ENCODE measurements at regions of chr1 and their contacts with region 1.

Region 1: DNA sequence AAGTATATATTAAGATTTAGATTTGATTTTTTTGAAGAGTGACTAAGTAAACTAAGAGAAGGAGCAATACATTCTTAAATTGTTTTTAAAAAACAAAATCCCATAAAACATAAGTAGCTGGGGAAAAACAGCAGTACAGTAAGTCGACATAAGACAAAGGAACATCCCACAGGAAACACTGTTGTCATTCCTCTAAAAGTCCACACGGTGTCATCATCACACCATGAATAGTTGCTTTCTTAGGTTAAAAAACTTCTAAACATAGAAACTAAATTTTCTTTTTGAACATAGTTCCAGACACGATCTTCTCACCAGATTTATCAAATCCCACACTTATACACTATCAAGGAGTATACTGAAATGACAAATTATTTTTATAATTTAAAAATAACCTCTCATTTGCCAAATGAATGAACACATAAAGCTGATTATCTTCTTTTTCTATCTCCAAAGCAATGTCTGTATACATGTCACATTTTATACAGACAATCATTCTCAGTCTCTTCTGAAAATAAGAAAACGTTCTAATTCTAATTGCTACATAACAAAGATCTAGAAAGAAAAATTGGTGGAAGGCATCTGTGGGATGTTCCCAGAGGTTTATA is 15.8 kb downstream of the ODF2L start:
- DNase-seq: peak; percentile 75
- H3K4me3 Mint-ChIP-seq: no peak overlapping the region
- H3K27ac Mint-ChIP-seq: no peak overlapping the region
- H3K4me1 Mint-ChIP-seq: peaks cover 3% of the 10 kb centered on the region
- H3K27me3 Mint-ChIP-seq: no peaks in the 10 kb centered on the region

Region 2: DNA sequence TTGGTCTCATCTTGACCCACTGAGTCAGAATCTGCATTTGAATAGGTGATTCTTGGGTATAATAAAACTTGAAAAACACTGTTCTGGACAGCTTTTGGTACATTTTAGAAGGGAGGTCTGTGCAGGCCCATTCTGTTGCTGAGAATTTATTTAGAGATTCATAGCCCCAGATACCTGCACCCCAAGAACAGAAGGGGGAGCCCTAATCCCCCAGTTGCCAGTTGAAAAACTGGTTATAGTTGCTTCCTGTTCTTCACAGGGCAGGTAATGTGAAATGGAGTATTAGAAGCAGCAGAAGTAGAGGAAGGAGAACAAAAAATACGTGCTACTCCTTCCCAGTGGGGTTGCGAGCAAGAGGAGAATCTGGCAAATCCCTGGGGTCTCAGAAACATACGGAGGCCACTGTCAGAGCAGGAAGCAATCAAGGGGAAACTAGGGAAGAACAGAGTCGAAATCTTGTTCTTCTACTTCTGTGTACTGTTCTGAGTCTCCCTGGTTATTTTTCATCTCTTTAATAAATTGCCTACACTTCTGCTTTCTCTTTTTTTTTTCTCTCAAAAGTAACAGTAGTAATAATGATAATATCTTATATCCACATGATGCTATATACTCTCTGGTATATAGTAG is 39.0 kb after region 1 on chr1:
- intact Hi-C with region 1: loop called (anchors 2 kb)
- DNase-seq: peak; percentile 85
- H3K4me3 Mint-ChIP-seq: peak overlapping the region; percentile 44
- H3K27ac Mint-ChIP-seq: no peak overlapping the region
- H3K4me1 Mint-ChIP-seq: peaks cover 2% of the 10 kb centered on the region
- H3K27me3 Mint-ChIP-seq: peaks cover 14% of the 10 kb centered on the region

Region 3: GRCh38 chr1:86499987-86500593 is 119.7 kb after region 1 on chr1:
- intact Hi-C with region 1: loop called (anchors 1 kb)
- DNase-seq: no peak
- H3K4me3 Mint-ChIP-seq: no peak overlapping the region
- H3K27ac Mint-ChIP-seq: no peak overlapping the region
- H3K4me1 Mint-ChIP-seq: peaks cover 12% of the 10 kb centered on the region
- H3K27me3 Mint-ChIP-seq: peaks cover 28% of the 10 kb centered on the region

Region 4: DNA sequence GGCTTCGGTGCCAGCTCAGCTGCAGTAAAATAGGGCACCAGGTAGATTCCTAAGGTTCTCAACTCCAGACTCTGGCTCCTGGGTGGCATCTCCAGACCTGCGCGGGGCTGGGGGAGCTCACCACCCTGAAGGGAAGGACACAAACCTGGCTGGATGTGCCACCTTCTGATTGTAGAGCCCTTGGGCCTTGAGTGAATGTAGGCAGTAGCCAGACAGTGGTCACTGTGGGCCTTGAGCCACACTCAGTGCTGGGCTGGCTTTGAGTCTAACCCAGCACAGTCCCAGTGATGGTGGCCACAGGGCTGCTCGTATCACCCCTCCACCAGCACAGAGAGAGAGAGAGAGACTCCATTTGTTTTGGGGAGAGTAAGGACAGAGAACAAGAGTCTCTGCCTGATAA is 286.0 kb after region 1 on chr1:
- intact Hi-C with region 1: no loop called
- DNase-seq: no peak
- H3K4me3 Mint-ChIP-seq: no peak overlapping the region
- H3K27ac Mint-ChIP-seq: no peak overlapping the region
- H3K4me1 Mint-ChIP-seq: no peaks in the 10 kb centered on the region
- H3K27me3 Mint-ChIP-seq: no peaks in the 10 kb centered on the region

Region 5: GRCh38 chr1:86741947-86742572 is 361.7 kb after region 1 on chr1:
- intact Hi-C with region 1: loop called (anchors 5 kb)
- DNase-seq: peak; percentile 72
- H3K4me3 Mint-ChIP-seq: no peak overlapping the region
- H3K27ac Mint-ChIP-seq: no peak overlapping the region
- H3K4me1 Mint-ChIP-seq: peaks cover 4% of the 10 kb centered on the region
- H3K27me3 Mint-ChIP-seq: no peaks in the 10 kb centered on the region

Region 6: GRCh38 chr1:87084244-87084836 is 704.0 kb after region 1 on chr1:
- intact Hi-C with region 1: loop called (anchors 5 kb)
- DNase-seq: no peak
- H3K4me3 Mint-ChIP-seq: no peak overlapping the region
- H3K27ac Mint-ChIP-seq: no peak overlapping the region
- H3K4me1 Mint-ChIP-seq: peaks cover 4% of the 10 kb centered on the region
- H3K27me3 Mint-ChIP-seq: no peaks in the 10 kb centered on the region